ENCODE measurements at regions of chr7 and their contacts with region 1.

Region 1: DNA sequence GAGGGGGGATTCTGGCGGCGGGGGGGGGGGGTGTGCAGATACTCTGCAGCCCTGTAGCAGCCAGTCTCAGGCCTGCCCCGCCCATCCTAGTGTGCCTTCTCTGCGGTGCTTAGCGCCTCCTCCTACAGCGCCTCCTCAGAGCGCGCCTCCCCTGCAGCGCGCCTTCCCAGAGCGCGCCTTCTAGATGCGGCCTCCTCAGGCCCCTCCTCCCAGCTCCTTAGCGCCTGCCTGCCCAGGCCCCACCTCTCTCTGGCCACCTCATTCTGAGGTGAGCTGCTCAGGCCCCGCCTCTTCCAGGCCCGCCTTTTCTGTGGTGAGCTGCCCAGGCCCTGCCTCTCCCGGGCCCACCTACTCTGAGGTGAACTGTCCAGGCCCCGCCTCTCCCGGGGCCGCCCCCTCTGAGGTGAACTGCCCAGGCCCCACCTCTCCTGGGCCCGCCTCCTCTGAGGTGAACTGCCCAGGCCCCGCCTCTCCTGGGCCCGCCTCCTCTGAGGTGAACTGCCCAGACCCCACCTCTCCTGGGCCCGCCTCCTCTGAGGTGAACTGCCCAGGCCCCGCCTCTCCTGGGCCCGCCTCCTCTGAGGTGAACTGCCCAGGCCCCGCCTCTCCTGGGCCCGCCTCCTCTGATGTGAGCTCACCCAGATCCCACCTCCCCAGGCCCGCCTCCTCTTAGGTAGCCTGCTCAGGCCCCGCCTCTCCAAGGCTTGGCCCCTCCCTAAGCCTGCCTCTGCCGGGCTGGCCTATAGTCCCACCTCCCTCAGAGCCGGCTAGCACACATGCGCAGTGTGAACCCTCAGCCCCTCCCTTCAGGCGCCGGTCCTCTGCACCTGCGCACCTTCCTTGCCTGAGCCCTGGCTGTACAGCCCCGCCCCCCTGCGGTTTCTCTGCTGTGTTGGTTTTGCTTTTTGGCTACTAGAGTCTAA is 2.1 kb upstream of the SGCE start:
- DNase-seq: peak; percentile 79 to 96
- H3K4me3 ChIP-seq: peak overlapping the region; percentile 80 to 85
- H3K27ac ChIP-seq: peak overlapping the region; percentile 51 to 63
- H3K4me1 ChIP-seq: peaks cover 3 to 4% of the 10 kb centered on the region in 2 donors
- H3K27me3 ChIP-seq: no peaks in the 10 kb centered on the region
- CTCF ChIP-seq: no peak

Region 2: DNA sequence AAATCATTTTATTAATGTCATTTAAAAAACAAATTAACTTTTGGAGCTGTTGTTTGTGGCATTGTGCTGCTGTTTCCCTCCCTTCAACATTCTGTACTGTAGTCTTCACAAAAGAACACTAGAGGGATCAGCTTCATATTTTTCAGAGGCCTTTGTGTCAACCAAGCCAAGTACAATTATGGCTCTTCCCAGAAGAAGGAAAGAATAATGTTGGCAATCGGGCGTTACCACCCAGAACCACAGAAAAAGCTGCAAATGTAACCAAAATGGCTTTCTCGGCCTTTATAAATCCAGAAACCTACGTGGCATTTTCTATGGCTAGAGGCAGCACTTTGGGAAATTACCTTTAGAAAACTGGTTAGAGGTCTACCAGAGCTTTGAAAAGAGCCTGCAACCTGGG is 362.2 kb before region 1 on chr7:
- intact Hi-C with region 1: loop called (anchors 5 kb)
- DNase-seq: no peak
- H3K4me3 ChIP-seq: peak overlapping the region; percentile 37 to 61
- H3K27ac ChIP-seq: peak overlapping the region; percentile 86
- H3K4me1 ChIP-seq: peaks cover 8 to 41% of the 10 kb centered on the region in 2 donors
- H3K27me3 ChIP-seq: no peaks in the 10 kb centered on the region
- CTCF ChIP-seq: peak; percentile 51 to 74 (median 69)

Region 3: GRCh38 chr7:94436018-94436604 is 221.9 kb before region 1 on chr7:
- intact Hi-C with region 1: loop called (anchors 5 kb)
- DNase-seq: peak in 1 of 2 donors; percentile 82
- H3K4me3 ChIP-seq: no peak overlapping the region
- H3K27ac ChIP-seq: no peak overlapping the region
- H3K4me1 ChIP-seq: no peaks in the 10 kb centered on the region
- H3K27me3 ChIP-seq: no peaks in the 10 kb centered on the region
- CTCF ChIP-seq: peak; percentile 65 to 77 (median 74)

Region 4: GRCh38 chr7:94509879-94510581 is 148.0 kb before region 1 on chr7:
- intact Hi-C with region 1: loop called (anchors 5 kb)
- DNase-seq: peak in 1 of 2 donors; percentile 74
- H3K4me3 ChIP-seq: peak overlapping the region; percentile 87 to 98
- H3K27ac ChIP-seq: peak overlapping the region; percentile 87 to 96
- H3K4me1 ChIP-seq: peaks cover 0 to 3% of the 10 kb centered on the region in 2 donors
- H3K27me3 ChIP-seq: no peaks in the 10 kb centered on the region
- CTCF ChIP-seq: peak in 2 of 3 experiments; percentile 8 to 22

Region 5: DNA sequence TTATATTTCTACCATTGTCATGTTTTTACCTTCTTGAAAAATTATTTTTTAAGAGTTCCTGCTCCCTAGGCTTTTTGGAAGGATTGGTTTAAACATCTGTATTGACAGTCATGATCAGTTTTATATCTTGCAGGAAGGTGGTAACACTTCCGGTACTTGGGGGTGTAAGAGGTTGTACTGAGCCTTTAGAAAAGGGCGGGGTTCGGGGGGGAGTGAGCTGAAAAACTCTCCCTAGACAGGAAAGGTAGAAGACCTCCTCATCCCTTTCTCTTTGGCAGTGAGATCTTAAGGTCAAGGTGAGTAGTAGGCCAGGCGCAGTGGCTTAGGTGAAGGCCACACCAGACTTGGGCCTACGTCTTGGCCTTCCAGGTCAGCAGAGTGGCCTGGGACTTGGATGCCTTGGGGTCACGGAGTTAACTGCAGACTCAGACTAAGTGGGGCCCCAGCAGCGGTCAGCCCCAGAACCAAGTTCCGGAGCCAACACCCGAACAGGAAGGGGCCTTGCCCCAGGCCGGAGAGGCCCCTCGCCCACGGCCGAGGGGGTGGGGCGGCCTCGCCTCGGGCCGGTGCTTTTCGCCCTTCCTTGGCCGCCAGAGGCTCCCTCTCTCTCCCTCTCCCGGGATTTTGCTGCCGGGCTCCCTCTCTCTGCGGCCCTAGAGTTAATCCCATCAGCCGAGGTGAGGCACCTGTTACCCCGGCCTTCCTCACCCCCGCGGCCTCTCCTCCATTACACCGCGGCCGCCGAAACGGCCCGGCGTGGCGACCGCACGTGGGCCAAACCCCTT is 249.2 kb after region 1 on chr7 and contains the start of gene PPP1R9A:
- intact Hi-C with region 1: loop called (anchors 5 kb)
- DNase-seq: no peak
- H3K4me3 ChIP-seq: peak within 1 kb of the TSS; percentile 64 to 77
- H3K27ac ChIP-seq: peak within 1 kb of the TSS; percentile 59 to 60
- H3K4me1 ChIP-seq: no peaks in the 10 kb centered on the region
- H3K27me3 ChIP-seq: no peaks in the 10 kb centered on the region
- CTCF ChIP-seq: peak in 1 of 3 experiments; percentile 25
- total RNA-seq, gene PPP1R9A: 0.85 TPM

Measured in ascending aorta (tissue), 2 donors.